K562 (cell line): ENCODE measurements at regions of chr7 and their contacts with region 1.

Region 1: DNA sequence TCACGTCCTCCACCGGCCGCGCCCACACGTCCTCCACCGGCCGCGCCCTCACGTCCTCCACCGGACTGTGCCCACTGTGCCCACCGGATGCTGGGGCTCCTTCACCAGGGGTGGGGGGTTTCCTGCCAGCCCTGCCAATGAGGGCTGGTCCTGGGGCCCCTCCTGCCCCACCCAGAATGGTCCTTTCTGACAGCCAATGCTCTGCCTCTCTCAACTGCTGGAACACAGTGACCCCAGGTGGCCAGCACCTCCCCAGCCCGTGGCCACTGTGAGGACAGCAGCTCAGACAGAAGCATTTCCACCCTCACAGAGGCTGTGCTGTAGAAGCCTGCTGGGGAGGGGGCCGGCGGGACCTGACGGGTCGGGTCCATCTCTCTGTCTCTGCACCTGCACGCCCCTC is 90.1 kb upstream of the DNAAF5 start:
- DNase-seq: peak; percentile 68 to 80 (median 74)
- ATAC-seq: peak; percentile 97
- H3K4me3 ChIP-seq: peak overlapping the region; percentile 39
- H3K27ac ChIP-seq: peak overlapping the region; percentile 52; the same call in 2 of the 3 replicates
- H3K4me1 ChIP-seq: peaks cover 4 to 35% of the 10 kb centered on the region in 2 experiments; a peak in 4 of 5 replicates
- H3K27me3 ChIP-seq: no peaks in the 10 kb centered on the region
- CTCF ChIP-seq: peak; percentile 77 to 88 (median 81)
- EP300 ChIP-seq: no peak
- POLR2A ChIP-seq: no peak
- RAD21 ChIP-seq: peak; percentile 93 to 95

Region 2: DNA sequence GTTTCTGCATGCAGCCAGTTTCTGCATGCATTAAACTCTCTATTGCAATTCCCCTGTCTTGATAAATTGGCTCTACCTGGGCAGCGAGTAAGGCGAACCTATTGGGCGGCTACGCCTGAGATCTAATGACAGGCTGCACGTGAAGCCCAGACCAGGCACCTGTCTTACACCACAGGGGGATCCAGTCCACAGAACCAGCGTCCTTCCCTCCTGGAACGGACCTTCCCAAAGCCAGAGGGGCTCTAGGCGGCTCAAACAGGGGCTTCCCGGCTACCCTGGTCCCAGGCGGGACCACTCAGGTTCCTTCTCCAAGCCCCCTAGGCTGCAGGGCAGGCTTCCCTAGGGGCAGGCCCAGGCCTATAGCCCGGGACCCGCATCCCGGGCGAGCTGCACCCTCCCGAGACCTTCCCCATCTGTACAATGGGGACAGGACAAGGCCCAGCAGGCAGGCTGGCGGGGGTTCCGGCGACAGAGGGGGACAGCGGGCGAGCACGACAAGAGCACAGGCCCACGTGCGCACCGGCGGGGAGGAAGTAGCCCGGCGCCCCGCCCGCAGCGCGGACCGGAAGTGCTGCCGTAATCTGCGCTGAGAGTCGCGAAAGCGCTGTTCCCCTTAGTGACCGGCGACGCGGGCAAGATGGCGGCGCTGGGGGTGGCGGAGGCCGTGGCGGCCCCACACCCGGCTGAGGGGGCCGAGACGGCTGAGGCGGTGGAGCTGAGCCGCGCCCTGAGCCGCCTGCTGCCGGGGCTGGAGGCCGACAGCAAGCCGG is 89.9 kb after region 1 on chr7 and contains the start of gene DNAAF5:
- CTCF ChIA-PET with region 1: no interaction called
- POLR2A ChIA-PET with region 1: interaction called, 3 read pairs
- in situ Hi-C with region 1: no loop called
- intact Hi-C with region 1: loop called (anchors 2 kb)
- DNase-seq: peak; percentile 85 to 96 (median 88)
- ATAC-seq: peak; percentile 94
- H3K4me3 ChIP-seq: peak within 1 kb of the TSS; percentile 86
- H3K27ac ChIP-seq: peak within 1 kb of the TSS; percentile 86
- H3K4me1 ChIP-seq: peaks cover 23 to 43% of the 10 kb centered on the region in 2 experiments; a peak in 4 of 5 replicates
- H3K27me3 ChIP-seq: no peaks in the 10 kb centered on the region
- CTCF ChIP-seq: no peak
- EP300 ChIP-seq: no peak
- POLR2A ChIP-seq: peak; percentile 79
- RAD21 ChIP-seq: no peak
- polyA plus RNA-seq, gene DNAAF5: 3.1 to 5.1 TPM